Activated CD8-positive, alpha-beta T cell treated with anti-CD3 and anti-CD28 coated beads for 36 hours (primary cell): ENCODE measurements at regions of chr12 and their contacts with region 1.

Region 1: DNA sequence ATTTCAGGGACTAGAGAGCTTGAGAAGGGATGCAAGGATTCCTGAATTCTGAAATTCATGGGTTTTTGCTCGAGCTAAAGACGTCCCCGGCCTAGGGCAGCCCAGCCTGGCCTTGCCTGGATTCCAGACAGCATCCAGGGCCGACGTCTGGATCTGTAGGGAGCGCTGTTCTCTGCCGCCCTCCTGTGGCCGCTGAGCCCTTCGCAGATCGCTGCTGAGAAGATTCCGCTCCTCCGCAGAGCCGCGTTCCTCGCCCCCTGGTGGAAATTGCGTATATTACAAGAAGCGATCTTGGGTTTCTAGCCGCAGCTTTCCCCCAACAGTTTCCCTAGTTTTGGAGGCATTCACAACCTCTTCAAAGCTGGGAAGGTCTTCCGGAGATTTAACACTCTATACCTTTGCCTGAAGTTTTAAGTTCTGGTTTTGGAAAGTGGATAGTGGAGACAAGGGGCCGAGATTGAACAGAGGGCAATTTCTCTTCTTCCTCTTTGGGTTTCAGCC is 5.1 kb downstream of the CISTR start:
- DNase-seq: peak; percentile 92
- ATAC-seq: peak; percentile 84
- H3K4me3 Mint-ChIP-seq: no peak overlapping the region
- H3K27ac Mint-ChIP-seq: no peak overlapping the region
- H3K4me1 Mint-ChIP-seq: peaks cover 16% of the 10 kb centered on the region
- H3K27me3 Mint-ChIP-seq: peaks cover 26% of the 10 kb centered on the region
- CTCF ChIP-seq: peak; percentile 99

Region 2: GRCh38 chr12:53543539-53543938 is 203.1 kb before region 1 on chr12:
- CTCF ChIA-PET with region 1: interaction called, 43 read pairs
- POLR2A ChIA-PET with region 1: no interaction called
- intact Hi-C with region 1: loop called (anchors 10 kb)
- DNase-seq: peak; percentile 79
- ATAC-seq: peak; percentile 99
- H3K4me3 Mint-ChIP-seq: no peak overlapping the region
- H3K27ac Mint-ChIP-seq: peak overlapping the region; percentile 79
- H3K4me1 Mint-ChIP-seq: peaks cover 16% of the 10 kb centered on the region
- H3K27me3 Mint-ChIP-seq: no peaks in the 10 kb centered on the region
- CTCF ChIP-seq: peak; percentile 87

Region 3: GRCh38 chr12:53696285-53696654 is 50.4 kb before region 1 on chr12:
- CTCF ChIA-PET with region 1: interaction called, 361 read pairs
- POLR2A ChIA-PET with region 1: interaction called, 4 read pairs
- intact Hi-C with region 1: no loop called
- DNase-seq: no peak
- ATAC-seq: no peak
- H3K4me3 Mint-ChIP-seq: no peak overlapping the region
- H3K27ac Mint-ChIP-seq: no peak overlapping the region
- H3K4me1 Mint-ChIP-seq: peaks cover 27% of the 10 kb centered on the region
- H3K27me3 Mint-ChIP-seq: peaks cover 75% of the 10 kb centered on the region
- CTCF ChIP-seq: no peak

Region 4: GRCh38 chr12:53717319-53717718 is 29.3 kb before region 1 on chr12:
- CTCF ChIA-PET with region 1: interaction called, 418 read pairs
- POLR2A ChIA-PET with region 1: no interaction called
- intact Hi-C with region 1: no loop called
- DNase-seq: no peak
- ATAC-seq: no peak
- H3K4me3 Mint-ChIP-seq: no peak overlapping the region
- H3K27ac Mint-ChIP-seq: no peak overlapping the region
- H3K4me1 Mint-ChIP-seq: no peaks in the 10 kb centered on the region
- H3K27me3 Mint-ChIP-seq: no peaks in the 10 kb centered on the region
- CTCF ChIP-seq: no peak

Region 5: GRCh38 chr12:53757095-53757770 is 10.6 kb after region 1 on chr12:
- CTCF ChIA-PET with region 1: interaction called, 154 read pairs
- POLR2A ChIA-PET with region 1: interaction called, 8 read pairs
- intact Hi-C with region 1: no loop called
- DNase-seq: peak; percentile 96
- ATAC-seq: peak; percentile 98
- H3K4me3 Mint-ChIP-seq: peak overlapping the region; percentile 62
- H3K27ac Mint-ChIP-seq: peak overlapping the region; percentile 78
- H3K4me1 Mint-ChIP-seq: peaks cover 23% of the 10 kb centered on the region
- H3K27me3 Mint-ChIP-seq: peaks cover 25% of the 10 kb centered on the region
- CTCF ChIP-seq: peak; percentile 92

Region 6: DNA sequence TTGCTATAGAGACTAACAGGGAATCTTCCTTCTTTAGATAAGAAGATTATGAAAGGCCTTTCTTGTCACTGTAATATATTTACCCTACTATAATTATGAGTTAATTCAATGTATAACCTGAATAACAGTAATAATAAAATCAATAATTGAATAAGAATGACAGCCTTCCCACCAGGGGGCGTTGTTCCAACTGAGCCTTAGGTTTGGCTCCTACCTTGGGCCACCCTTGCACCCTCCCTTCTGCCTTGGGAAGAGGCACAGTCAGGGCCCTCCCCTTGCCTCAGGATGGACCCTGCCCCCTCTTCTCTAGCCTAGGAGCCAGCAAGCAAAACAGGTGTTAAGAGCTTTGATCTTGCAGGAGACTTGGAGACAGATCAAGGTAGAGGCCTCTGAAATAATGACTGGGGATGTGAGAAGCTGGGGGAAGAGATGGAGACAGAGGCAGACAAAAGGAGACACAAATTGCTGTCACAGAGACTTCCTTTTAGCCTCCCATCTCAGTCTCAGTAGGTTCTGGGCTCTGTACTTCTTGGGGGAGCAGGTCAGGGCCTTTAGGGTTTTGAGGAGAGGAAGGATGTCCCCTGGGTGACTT is 45.2 kb after region 1 on chr12:
- CTCF ChIA-PET with region 1: interaction called, 15 read pairs
- POLR2A ChIA-PET with region 1: no interaction called
- intact Hi-C with region 1: no loop called
- DNase-seq: peak; percentile 46
- ATAC-seq: no peak
- H3K4me3 Mint-ChIP-seq: no peak overlapping the region
- H3K27ac Mint-ChIP-seq: no peak overlapping the region
- H3K4me1 Mint-ChIP-seq: no peaks in the 10 kb centered on the region
- H3K27me3 Mint-ChIP-seq: peaks cover 15% of the 10 kb centered on the region
- CTCF ChIP-seq: peak; percentile 77

Region 7: DNA sequence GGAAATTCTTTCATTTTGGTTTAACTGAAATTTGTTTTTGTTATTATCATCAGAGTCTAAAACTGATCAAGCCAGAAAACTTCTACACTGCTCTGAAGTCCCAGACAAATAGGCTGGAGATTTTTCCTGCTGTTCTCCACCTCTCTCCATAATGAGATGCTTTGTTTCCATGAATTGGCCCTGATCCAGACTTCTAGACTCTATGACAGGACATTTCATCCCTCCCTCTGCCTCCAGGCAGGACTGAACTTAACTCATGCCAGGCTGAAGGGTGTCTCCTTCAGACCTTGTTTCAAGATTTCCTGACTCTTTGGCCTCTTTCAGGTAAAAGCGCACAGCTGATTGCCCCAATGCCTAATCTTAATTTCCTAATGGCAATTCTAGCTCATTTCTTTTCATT is 122.9 kb after region 1 on chr12:
- CTCF ChIA-PET with region 1: no interaction called
- POLR2A ChIA-PET with region 1: no interaction called
- intact Hi-C with region 1: no loop called
- DNase-seq: no peak
- ATAC-seq: no peak
- H3K4me3 Mint-ChIP-seq: no peak overlapping the region
- H3K27ac Mint-ChIP-seq: no peak overlapping the region
- H3K4me1 Mint-ChIP-seq: no peaks in the 10 kb centered on the region
- H3K27me3 Mint-ChIP-seq: peaks cover 28% of the 10 kb centered on the region
- CTCF ChIP-seq: no peak